Activated CD4-positive, alpha-beta memory T cell treated with anti-CD3 and anti-CD28 coated beads, Interleukin-2, amount 10 ng/mL, durations not matched to agents 7 days and 5 days (primary cell): ENCODE measurements at regions of chr17 and their contacts with region 1.

Region 1: GRCh38 chr17:38702166-38702899 is 2.7 kb upstream of the MLLT6 start:
- DNase-seq: peak; percentile 86
- H3K4me3 Mint-ChIP-seq: peak overlapping the region; percentile 87
- H3K27ac Mint-ChIP-seq: peak overlapping the region; percentile 99
- H3K4me1 Mint-ChIP-seq: peaks cover 46% of the 10 kb centered on the region
- H3K27me3 Mint-ChIP-seq: no peaks in the 10 kb centered on the region

Region 2: GRCh38 chr17:38674749-38675615 is 27.4 kb before region 1 on chr17 and contains the start of gene EPOP:
- CTCF ChIA-PET with region 1: interaction called, 10 read pairs
- POLR2A ChIA-PET with region 1: interaction called, 34 read pairs
- DNase-seq: peak; percentile 91
- H3K4me3 Mint-ChIP-seq: peak within 1 kb of the TSS; percentile 63
- H3K27ac Mint-ChIP-seq: no peak within 1 kb of the TSS
- H3K4me1 Mint-ChIP-seq: peaks cover 44% of the 10 kb centered on the region
- H3K27me3 Mint-ChIP-seq: peaks cover 27% of the 10 kb centered on the region
- total RNA-seq, gene EPOP: 10.2 to 10.3 TPM

Region 3: GRCh38 chr17:38752119-38752929 is 50.0 kb after region 1 on chr17 and contains the start of gene PSMB3:
- CTCF ChIA-PET with region 1: no interaction called
- POLR2A ChIA-PET with region 1: interaction called, 14 read pairs
- DNase-seq: peak; percentile 97
- H3K4me3 Mint-ChIP-seq: peak within 1 kb of the TSS; percentile 97
- H3K27ac Mint-ChIP-seq: peak within 1 kb of the TSS; percentile 94
- H3K4me1 Mint-ChIP-seq: peaks cover 47% of the 10 kb centered on the region
- H3K27me3 Mint-ChIP-seq: peaks cover 28% of the 10 kb centered on the region
- total RNA-seq, gene PSMB3: 241 to 242 TPM